ENCODE measurements at regions of chr11 and their contacts with region 1.

Region 1: DNA sequence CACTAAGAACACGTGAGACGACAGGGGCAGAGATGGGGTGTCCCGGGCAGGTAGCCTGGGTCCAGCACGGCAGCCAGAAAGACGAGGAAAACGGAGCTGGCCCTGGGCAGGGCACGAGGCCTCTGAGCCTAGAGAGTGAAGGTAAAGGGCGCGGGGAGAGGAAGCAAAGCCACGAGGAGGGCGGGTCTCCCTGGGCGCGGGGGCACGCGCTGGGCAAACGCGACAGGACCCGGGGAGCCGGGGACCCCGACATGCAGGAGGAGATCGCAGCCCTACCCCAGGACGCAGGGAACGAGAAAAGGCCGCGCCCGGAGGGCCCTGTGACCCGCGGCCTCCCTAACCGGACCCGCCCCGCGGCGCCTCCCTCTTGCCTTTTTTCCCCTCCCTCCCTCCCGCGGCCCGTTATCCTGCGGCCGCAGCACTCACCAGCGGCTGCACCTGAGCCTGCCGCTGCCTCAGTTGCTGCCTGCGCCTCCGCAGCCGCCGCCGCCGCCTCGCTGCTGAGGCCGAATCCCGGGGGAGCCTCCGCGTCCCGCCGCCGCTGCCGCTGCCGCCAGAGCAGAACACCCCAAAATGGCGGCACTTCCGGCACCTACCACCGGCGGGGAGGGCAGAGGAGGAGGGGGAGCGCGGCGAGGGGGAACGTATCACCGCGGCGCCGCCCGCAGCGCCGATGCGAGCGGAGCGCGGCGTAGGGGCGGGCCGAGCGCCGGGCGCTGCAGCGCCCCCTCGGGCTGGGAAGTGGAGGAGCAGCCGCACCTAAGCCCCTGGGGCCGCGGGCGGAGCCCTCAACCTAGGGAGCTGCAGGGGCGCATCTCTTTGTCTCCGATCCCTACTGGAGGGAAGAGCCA is at the start of gene CELF1:
- DNase-seq: peak; percentile 96
- H3K4me3 Mint-ChIP-seq: peak within 1 kb of the TSS; percentile 95
- H3K27ac Mint-ChIP-seq: peak within 1 kb of the TSS; percentile 92
- H3K4me1 Mint-ChIP-seq: peaks cover 39% of the 10 kb centered on the region
- H3K27me3 Mint-ChIP-seq: no peaks in the 10 kb centered on the region
- total RNA-seq, gene CELF1: 103 to 115 TPM

Region 2: GRCh38 chr11:47213985-47214564 is 338.7 kb before region 1 on chr11:
- CTCF ChIA-PET with region 1: no interaction called
- POLR2A ChIA-PET with region 1: no interaction called
- intact Hi-C with region 1: loop called (anchors 10 kb)
- DNase-seq: peak; percentile 94
- H3K4me3 Mint-ChIP-seq: peak overlapping the region; percentile 97
- H3K27ac Mint-ChIP-seq: peak overlapping the region; percentile 99
- H3K4me1 Mint-ChIP-seq: peaks cover 28% of the 10 kb centered on the region
- H3K27me3 Mint-ChIP-seq: no peaks in the 10 kb centered on the region

Region 3: GRCh38 chr11:47514825-47515647 is 37.8 kb before region 1 on chr11:
- CTCF ChIA-PET with region 1: interaction called, 20 read pairs
- POLR2A ChIA-PET with region 1: interaction called, 5 read pairs
- intact Hi-C with region 1: loop called (anchors 1 kb)
- DNase-seq: peak; percentile 73
- H3K4me3 Mint-ChIP-seq: peak overlapping the region; percentile 0
- H3K27ac Mint-ChIP-seq: peak overlapping the region; percentile 56
- H3K4me1 Mint-ChIP-seq: peaks cover 82% of the 10 kb centered on the region
- H3K27me3 Mint-ChIP-seq: no peaks in the 10 kb centered on the region

Region 4: DNA sequence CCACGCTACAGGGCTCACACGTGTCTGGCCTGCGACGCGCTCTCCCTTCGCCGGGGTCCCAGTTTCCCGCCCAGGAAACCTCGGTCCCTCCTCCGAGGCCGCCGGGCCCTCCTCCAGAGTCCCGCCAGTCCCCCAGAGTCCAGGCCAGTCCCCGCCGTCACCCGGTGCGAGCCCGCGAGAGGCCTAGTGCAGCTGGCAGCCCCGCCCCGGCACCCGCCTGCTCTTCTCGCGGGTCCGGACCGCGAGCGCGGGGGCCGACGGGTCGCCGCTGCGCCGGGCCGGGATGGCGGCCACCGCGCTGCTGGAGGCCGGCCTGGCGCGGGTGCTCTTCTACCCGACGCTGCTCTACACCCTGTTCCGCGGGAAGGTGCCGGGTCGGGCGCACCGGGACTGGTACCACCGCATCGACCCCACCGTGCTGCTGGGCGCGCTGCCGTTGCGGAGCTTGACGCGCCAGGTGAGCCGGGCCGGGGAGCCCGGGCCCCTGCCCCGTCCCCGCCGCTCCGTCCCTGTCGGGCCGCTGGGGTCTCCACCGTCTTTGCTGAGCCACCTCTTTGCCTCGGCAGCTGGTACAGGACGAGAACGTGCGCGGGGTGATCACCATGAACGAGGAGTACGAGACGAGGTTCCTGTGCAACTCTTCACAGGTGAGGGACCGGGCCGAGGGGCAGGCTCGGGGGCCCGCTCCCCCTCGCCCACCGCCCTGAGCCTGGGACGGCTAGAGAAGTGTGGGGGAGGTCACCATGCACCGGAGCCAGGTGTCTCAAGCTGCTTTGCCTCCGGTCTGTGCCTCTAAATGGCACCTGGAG is 12.8 kb after region 1 on chr11 and contains the start of gene PTPMT1:
- CTCF ChIA-PET with region 1: interaction called, 32 read pairs
- POLR2A ChIA-PET with region 1: interaction called, 20 read pairs
- intact Hi-C with region 1: loop called (anchors 1 kb)
- DNase-seq: peak; percentile 80
- H3K4me3 Mint-ChIP-seq: peak within 1 kb of the TSS; percentile 81
- H3K27ac Mint-ChIP-seq: peak within 1 kb of the TSS; percentile 72
- H3K4me1 Mint-ChIP-seq: peaks cover 29% of the 10 kb centered on the region
- H3K27me3 Mint-ChIP-seq: no peaks in the 10 kb centered on the region
- total RNA-seq, gene PTPMT1: 45.7 to 47.9 TPM

Region 5: GRCh38 chr11:47766305-47767227 is 213.8 kb after region 1 on chr11:
- CTCF ChIA-PET with region 1: no interaction called
- POLR2A ChIA-PET with region 1: no interaction called
- intact Hi-C with region 1: loop called (anchors 2 kb)
- DNase-seq: peak; percentile 88
- H3K4me3 Mint-ChIP-seq: peak overlapping the region; percentile 91
- H3K27ac Mint-ChIP-seq: peak overlapping the region; percentile 100
- H3K4me1 Mint-ChIP-seq: peaks cover 18% of the 10 kb centered on the region
- H3K27me3 Mint-ChIP-seq: no peaks in the 10 kb centered on the region